Sigmoid colon (tissue), 7 donors: ENCODE measurements at regions of chr12 and their contacts with region 1.

Region 1: GRCh38 chr12:54191550-54192022 is 2.8 kb upstream of the SMUG1 start:
- DNase-seq: peak; percentile 86
- H3K4me3 ChIP-seq: no peak overlapping the region
- H3K27ac ChIP-seq: no peak overlapping the region
- H3K4me1 ChIP-seq: peaks cover 0 to 19% (median 14%) of the 10 kb centered on the region in 4 donors
- H3K27me3 ChIP-seq: peaks cover 0 to 58% (median 52%) of the 10 kb centered on the region in 3 donors
- CTCF ChIP-seq: peak; percentile 44 to 77 (median 66)
- EP300 ChIP-seq: no peak
- POLR2A ChIP-seq: no peak

Region 2: GRCh38 chr12:54005853-54006686 is 185.5 kb before region 1 on chr12:
- intact Hi-C with region 1: loop called (anchors 1 kb)
- DNase-seq: peak; percentile 91
- H3K4me3 ChIP-seq: peak overlapping the region in 2 of 4 donors; percentile 13 to 16
- H3K27ac ChIP-seq: no peak overlapping the region
- H3K4me1 ChIP-seq: peaks cover 0 to 18% (median 15%) of the 10 kb centered on the region in 4 donors
- H3K27me3 ChIP-seq: peaks cover 82 to 100% (median 99%) of the 10 kb centered on the region in 3 donors
- CTCF ChIP-seq: peak; percentile 83 to 93 (median 89)
- EP300 ChIP-seq: no peak
- POLR2A ChIP-seq: no peak

Region 3: GRCh38 chr12:54032627-54033100 is 158.9 kb before region 1 on chr12 and contains the start of gene HOXC5:
- intact Hi-C with region 1: loop called (anchors 1 kb)
- DNase-seq: peak; percentile 87
- H3K4me3 ChIP-seq: peak within 1 kb of the TSS; percentile 7 to 49 (median 32)
- H3K27ac ChIP-seq: peak within 1 kb of the TSS in 3 of 4 donors; percentile 33 to 65 (median 44)
- H3K4me1 ChIP-seq: peaks cover 0 to 42% (median 34%) of the 10 kb centered on the region in 4 donors
- H3K27me3 ChIP-seq: peaks cover 54 to 100% (median 96%) of the 10 kb centered on the region in 3 donors
- CTCF ChIP-seq: peak; percentile 78 to 97 (median 88)
- EP300 ChIP-seq: no peak
- POLR2A ChIP-seq: no peak
- total RNA-seq, gene HOXC5: 1.4 TPM in 1 of 4 donors, not detected in the others

Region 4: GRCh38 chr12:54053751-54054741 is 137.5 kb before region 1 on chr12 and contains the start of gene HOXC4:
- intact Hi-C with region 1: loop called (anchors 5 kb)
- DNase-seq: no peak
- H3K4me3 ChIP-seq: peak within 1 kb of the TSS; percentile 40 to 61 (median 52)
- H3K27ac ChIP-seq: peak within 1 kb of the TSS; percentile 58 to 69 (median 62)
- H3K4me1 ChIP-seq: peaks cover 0 to 41% (median 35%) of the 10 kb centered on the region in 4 donors
- H3K27me3 ChIP-seq: peaks cover 28 to 72% (median 56%) of the 10 kb centered on the region in 3 donors
- CTCF ChIP-seq: no peak
- EP300 ChIP-seq: no peak
- POLR2A ChIP-seq: no peak
- total RNA-seq, gene HOXC4: 0.66 to 1.2 (median 0.71) TPM in 3 of 4 donors, not detected in the other